ENCODE measurements at regions of chr17 and their contacts with region 1.

Region 1: DNA sequence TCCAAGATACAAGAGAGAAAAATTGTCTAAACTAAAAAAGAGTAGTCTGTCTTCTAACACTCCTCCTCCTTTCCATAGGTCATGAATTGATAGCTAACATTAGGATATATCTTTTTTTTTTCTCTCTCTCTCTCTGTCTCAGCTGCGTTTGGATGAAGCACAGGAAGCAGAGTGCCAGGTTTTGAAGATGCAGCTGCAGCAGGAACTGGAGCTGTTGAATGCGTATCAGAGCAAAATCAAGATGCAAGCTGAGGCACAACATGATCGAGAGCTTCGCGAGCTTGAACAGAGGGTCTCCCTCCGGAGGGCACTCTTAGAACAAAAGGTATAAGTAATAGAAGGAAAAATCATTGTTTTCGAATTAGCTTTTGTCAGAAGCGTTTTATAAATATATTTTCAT is 32.9 kb downstream of the ABHD15 start:
- DNase-seq: no peak
- ATAC-seq: no peak

Region 2: GRCh38 chr17:29369831-29370735 is 163.9 kb before region 1 on chr17:
- intact Hi-C with region 1: loop called (anchors 2 to 10 kb)
- DNase-seq: peak; percentile 71
- ATAC-seq: peak; percentile 92 to 98